Calu3 (cell line): ENCODE measurements at regions of chr10 and their contacts with region 1.

Region 1: GRCh38 chr10:30359373-30360206 is 10.5 kb upstream of the MTPAP start:
- DNase-seq: peak; percentile 78
- H3K4me3 Mint-ChIP-seq: no peak overlapping the region
- H3K27ac Mint-ChIP-seq: no peak overlapping the region
- H3K4me1 Mint-ChIP-seq: peaks cover 18% of the 10 kb centered on the region
- H3K27me3 Mint-ChIP-seq: peaks cover 15% of the 10 kb centered on the region
- CTCF ChIP-seq: peak; percentile 92

Region 2: GRCh38 chr10:30384701-30385201 is 25.2 kb after region 1 on chr10:
- CTCF ChIA-PET with region 1: interaction called, 20 read pairs
- intact Hi-C with region 1: no loop called
- DNase-seq: peak; percentile 50
- H3K4me3 Mint-ChIP-seq: no peak overlapping the region
- H3K27ac Mint-ChIP-seq: peak overlapping the region; percentile 19
- H3K4me1 Mint-ChIP-seq: peaks cover 31% of the 10 kb centered on the region
- H3K27me3 Mint-ChIP-seq: peaks cover 15% of the 10 kb centered on the region
- CTCF ChIP-seq: peak; percentile 52